ENCODE measurements at regions of chr3 and their contacts with region 1.

Region 1: GRCh38 chr3:61561374-61562041 is at the start of gene PTPRG:
- DNase-seq: peak; percentile 88
- H3K4me3 ChIP-seq: peak within 1 kb of the TSS; percentile 65
- H3K27ac ChIP-seq: peak within 1 kb of the TSS; percentile 97
- H3K4me1 ChIP-seq: peaks cover 13% of the 10 kb centered on the region
- H3K27me3 ChIP-seq: no peaks in the 10 kb centered on the region
- CTCF ChIP-seq: no peak
- total RNA-seq, gene PTPRG: 11.5 and 11.7 TPM in 2 replicates

Region 2: DNA sequence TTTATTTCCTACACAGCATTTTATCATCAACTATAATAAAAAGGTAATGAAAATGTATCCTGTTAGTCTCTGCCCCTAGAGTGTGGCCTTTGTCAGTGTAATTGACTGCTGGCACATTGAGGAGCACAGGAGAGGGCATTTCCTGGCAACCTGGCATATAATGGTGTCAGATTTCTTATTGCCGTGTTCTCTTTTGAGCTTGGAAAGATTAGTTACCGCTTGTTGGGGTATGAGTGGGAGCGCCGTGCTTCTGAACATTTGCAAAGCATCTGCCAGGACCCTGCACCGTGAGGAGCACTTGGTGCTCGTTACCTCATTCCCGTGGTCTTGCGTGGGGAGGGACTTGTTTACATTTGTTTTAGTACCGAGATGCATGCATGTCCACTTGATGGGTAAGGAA is 124.2 kb after region 1 on chr3:
- CTCF ChIA-PET with region 1: no interaction called
- POLR2A ChIA-PET with region 1: no interaction called
- intact Hi-C with region 1: loop called (anchors 5 kb)
- DNase-seq: peak; percentile 57
- H3K4me3 ChIP-seq: no peak overlapping the region
- H3K27ac ChIP-seq: no peak overlapping the region
- H3K4me1 ChIP-seq: peaks cover 54% of the 10 kb centered on the region
- H3K27me3 ChIP-seq: peaks cover 3% of the 10 kb centered on the region
- CTCF ChIP-seq: no peak

Region 3: GRCh38 chr3:61847784-61848462 is 286.4 kb after region 1 on chr3:
- CTCF ChIA-PET with region 1: no interaction called
- POLR2A ChIA-PET with region 1: no interaction called
- intact Hi-C with region 1: loop called (anchors 2 kb)
- DNase-seq: no peak
- H3K4me3 ChIP-seq: no peak overlapping the region
- H3K27ac ChIP-seq: no peak overlapping the region
- H3K4me1 ChIP-seq: peaks cover 4% of the 10 kb centered on the region
- H3K27me3 ChIP-seq: no peaks in the 10 kb centered on the region
- CTCF ChIP-seq: no peak

Region 4: DNA sequence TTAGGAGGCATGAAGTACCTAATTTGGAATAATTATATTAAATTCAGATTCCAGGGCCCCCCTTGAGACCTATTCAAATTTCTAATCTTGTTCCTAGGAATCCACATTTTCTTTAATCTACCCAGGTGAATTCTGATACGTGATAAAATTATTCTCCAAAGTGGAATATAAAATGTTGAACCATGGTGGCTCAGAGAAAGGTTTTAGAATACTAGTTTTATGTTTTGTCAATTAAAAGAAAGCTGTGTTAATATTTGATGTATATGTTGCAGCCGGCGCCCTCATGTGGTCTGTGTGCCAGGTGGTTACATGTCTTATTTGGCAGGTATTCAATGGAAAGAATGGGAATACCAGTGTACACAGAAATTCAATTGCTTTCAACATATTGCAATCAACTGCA is 490.0 kb after region 1 on chr3:
- CTCF ChIA-PET with region 1: no interaction called
- POLR2A ChIA-PET with region 1: no interaction called
- intact Hi-C with region 1: loop called (anchors 5 kb)
- DNase-seq: peak; percentile 19
- H3K4me3 ChIP-seq: no peak overlapping the region
- H3K27ac ChIP-seq: no peak overlapping the region
- H3K4me1 ChIP-seq: no peaks in the 10 kb centered on the region
- H3K27me3 ChIP-seq: no peaks in the 10 kb centered on the region
- CTCF ChIP-seq: peak; percentile 50

Measured in A673 (cell line).